Motor neuron (in vitro differentiated cells): ENCODE measurements at regions of chr14 and their contacts with region 1.

Region 1: DNA sequence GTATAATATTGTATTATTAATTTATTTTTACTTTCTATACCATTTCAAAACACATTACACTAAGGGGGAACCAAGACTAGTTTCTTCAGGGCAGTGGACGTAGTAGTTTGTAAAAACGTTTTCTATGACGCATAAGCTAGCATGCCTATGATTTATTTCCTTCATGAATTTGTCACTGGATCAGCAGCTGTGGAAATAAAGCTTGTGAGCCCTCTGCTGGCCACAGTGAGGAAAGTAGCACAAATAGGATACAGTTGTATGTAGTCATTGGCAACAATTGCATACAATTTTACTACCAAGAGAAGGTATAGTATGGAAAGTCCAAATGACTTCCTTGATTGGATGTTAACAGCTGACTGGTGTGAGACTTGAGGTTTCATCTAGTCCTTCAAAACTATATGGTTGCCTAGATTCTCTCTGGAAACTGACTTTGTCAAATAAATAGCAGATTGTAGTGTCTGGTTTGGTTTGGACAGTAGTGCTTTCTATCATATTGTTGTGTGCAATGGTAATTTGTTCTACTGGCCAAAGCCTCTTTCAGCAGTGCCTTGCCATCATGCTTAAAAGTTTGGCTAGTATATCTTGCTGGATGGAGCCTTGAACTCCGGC is 24.3 kb upstream of the PLEKHD1 start:
- ATAC-seq: peak; percentile 60 to 100 (median 82)
- H3K4me3 ChIP-seq: no peak overlapping the region
- H3K27ac ChIP-seq: no peak overlapping the region
- H3K4me1 ChIP-seq: no peaks in the 10 kb centered on the region

Region 2: DNA sequence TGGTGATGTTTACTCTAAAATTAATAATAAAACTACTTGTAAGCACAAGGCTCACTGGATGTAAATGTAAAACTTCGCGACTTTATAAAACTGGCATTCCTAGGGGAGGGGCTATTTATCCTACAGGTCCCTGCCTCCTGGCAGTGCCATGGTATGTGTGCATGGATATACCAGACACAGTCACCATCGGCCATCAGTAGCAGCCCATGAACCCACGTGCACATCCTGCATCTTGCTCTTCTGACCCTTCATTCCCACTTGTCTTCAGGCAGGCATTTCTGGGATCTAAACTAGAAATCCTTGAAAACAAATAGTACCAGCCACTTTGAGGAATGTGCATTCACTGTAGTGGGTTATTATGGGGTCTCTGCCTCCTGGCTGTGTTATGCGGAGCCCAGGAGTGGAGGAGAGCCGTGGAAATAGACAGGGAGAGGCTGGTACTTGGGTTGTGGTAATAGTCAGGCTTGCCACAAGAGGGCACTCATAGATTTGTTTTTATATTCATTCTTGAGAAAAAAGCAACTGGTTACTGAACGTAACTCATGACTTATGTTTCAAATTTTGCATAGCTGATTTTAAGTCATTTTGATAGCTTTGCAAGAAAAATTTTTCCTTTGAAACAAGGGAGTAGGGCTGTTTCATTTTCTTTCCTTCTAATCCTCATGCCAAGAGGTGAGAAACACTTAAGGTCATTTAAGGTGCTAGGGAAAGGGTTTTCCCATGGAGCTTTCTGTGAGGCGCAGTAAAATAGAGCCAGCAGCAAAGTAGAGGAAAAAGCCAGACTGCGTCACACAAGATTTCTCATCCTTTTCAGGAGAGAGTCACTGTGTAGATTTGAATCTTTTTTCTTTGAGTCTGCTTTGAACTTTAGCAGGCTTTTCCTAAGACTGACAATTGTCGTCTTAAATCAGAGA is 217.6 kb before region 1 on chr14:
- in situ Hi-C with region 1: loop called in 1 of 9 experiments (anchors 25 kb)
- ATAC-seq: peak; percentile 31 to 94 (median 71)
- H3K4me3 ChIP-seq: no peak overlapping the region
- H3K27ac ChIP-seq: no peak overlapping the region
- H3K4me1 ChIP-seq: no peaks in the 10 kb centered on the region

Region 3: GRCh38 chr14:69260861-69261564 is 199.2 kb before region 1 on chr14:
- in situ Hi-C with region 1: loop called in 2 of 9 experiments (anchors 25 kb)
- ATAC-seq: peak in 7 of 8 experiments; percentile 7 to 54 (median 41)
- H3K4me3 ChIP-seq: peak overlapping the region; percentile 44 to 74 (median 59)
- H3K27ac ChIP-seq: no peak overlapping the region
- H3K4me1 ChIP-seq: peaks cover 31 to 33% of the 10 kb centered on the region in 2 donors